Calu3 (cell line): ENCODE measurements at regions of chr1 and their contacts with region 1.

Region 1: GRCh38 chr1:244353551-244354091 is 98.1 kb downstream of the ADSS2 start:
- DNase-seq: peak; percentile 83
- H3K4me3 Mint-ChIP-seq: peak overlapping the region; percentile 27
- H3K27ac Mint-ChIP-seq: peak overlapping the region; percentile 95
- H3K4me1 Mint-ChIP-seq: peaks cover 74% of the 10 kb centered on the region
- H3K27me3 Mint-ChIP-seq: no peaks in the 10 kb centered on the region
- CTCF ChIP-seq: no peak

Region 2: DNA sequence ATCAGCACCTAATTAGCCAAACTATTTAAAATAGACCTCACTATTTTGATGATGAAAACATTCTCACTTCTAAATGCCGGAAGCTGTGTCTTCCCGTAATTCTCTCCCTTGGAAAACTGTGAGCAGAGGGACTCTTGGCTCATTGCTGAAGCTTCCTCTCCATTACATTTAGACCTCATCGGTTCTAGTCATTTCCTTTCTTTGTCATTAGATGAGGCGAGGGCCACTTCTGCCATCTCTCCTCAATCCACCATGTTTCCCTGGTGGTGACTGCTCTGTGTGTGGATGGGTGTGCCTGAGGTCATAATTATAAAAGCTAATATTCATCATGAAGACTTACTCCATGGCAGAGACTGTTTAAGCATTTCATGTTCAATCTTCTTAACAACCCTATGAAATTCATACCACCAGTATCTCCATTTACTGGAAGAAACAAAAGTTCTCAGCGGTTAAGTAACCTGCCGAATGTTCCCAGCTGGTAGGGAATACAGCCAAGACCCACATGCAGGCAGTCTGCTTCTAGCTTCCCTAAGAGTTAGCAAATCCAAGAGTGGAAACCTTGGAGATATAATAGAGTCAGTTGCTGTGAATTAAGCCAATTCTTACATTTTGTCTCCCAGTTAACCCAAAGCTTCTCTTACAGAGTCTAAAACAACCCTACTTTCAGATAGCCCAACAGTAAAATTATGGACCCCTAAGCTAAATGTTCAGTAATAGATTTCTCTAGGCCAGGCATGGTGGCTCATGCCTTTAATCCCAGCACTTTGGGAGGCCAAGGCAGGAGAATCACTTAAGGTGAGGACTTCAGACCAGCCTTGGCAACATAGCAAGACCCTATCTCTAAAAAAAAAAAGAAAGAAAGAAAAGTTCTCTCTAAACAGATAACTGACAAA is 146.3 kb before region 1 on chr1:
- CTCF ChIA-PET with region 1: no interaction called
- intact Hi-C with region 1: no loop called
- DNase-seq: no peak
- H3K4me3 Mint-ChIP-seq: no peak overlapping the region
- H3K27ac Mint-ChIP-seq: no peak overlapping the region
- H3K4me1 Mint-ChIP-seq: no peaks in the 10 kb centered on the region
- H3K27me3 Mint-ChIP-seq: no peaks in the 10 kb centered on the region
- CTCF ChIP-seq: no peak

Region 3: DNA sequence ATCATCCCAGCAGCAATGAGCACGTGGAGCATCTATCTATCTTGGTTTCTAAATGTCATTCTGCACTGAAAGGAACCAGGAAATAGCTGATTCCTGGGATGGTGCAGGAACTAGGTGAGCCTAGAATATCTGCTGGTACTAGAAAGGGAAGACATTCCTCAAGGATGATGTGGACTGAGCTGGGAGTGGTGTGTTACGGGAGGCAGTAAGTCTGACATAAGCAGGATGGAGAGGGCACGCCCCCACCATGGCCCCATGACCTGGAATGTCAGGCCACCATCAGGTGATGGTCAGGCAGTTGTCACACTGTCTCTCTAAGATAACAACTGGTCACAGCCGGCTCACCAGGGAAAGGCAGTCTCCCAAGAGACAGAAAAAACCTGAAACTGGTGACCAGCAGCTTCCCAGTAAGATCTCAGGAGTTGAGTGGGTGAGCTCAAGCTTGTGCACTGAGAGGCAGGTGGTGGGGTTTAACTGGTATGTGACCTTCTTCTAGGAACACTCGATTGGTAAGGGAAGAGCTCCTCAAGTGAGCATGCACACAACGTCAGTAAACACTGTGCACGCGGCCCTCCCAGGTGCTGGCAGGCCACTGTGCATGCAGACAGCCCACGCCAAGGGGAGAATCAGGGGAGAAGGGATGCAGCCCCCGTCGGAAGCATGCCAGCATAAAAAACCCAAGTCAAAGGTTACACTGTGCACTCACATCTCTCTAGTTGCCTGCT is 50.6 kb before region 1 on chr1:
- CTCF ChIA-PET with region 1: no interaction called
- intact Hi-C with region 1: loop called (anchors 2 kb)
- DNase-seq: peak; percentile 79
- H3K4me3 Mint-ChIP-seq: peak overlapping the region; percentile 56
- H3K27ac Mint-ChIP-seq: peak overlapping the region; percentile 92
- H3K4me1 Mint-ChIP-seq: peaks cover 49% of the 10 kb centered on the region
- H3K27me3 Mint-ChIP-seq: no peaks in the 10 kb centered on the region
- CTCF ChIP-seq: no peak

Region 4: DNA sequence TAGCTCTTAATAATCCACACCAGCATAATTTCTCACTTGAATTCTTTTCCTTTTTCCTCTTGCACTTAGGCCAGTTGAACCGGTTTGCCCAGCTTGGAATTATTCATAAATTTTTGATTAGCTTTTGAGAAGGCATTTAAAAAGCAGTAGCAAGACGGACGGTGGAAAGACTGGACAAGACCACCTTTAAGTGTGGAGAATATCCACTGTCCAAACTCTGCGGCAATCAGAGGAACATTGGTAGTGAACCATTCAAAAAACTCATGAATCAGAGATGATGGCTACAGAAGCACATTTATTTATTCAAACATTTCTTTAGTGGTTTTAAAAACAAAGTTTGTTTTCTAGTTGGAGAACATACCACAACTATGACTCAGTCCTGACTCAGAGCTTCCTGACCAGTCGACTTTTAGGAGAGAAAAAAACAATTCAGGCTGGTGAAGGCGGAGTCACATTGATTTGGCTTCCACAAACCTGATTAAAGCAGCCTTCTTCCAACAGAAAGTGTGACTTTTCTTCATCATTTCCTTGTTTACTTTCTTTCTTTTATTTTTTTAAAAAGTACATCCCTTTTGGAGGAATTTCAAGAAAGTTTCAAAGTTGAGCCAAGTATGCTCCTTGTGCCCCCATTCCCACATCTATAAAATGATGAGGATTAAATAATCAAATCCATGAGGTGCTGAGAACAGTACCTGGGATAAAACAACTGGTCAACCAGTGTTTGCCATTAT is 30.7 kb before region 1 on chr1:
- CTCF ChIA-PET with region 1: interaction called, 10 read pairs
- intact Hi-C with region 1: loop called (anchors 2 kb)
- DNase-seq: peak; percentile 81
- H3K4me3 Mint-ChIP-seq: peak overlapping the region; percentile 48
- H3K27ac Mint-ChIP-seq: peak overlapping the region; percentile 94
- H3K4me1 Mint-ChIP-seq: peaks cover 65% of the 10 kb centered on the region
- H3K27me3 Mint-ChIP-seq: no peaks in the 10 kb centered on the region
- CTCF ChIP-seq: no peak

Region 5: GRCh38 chr1:244391761-244392160 is 38.1 kb after region 1 on chr1:
- CTCF ChIA-PET with region 1: no interaction called
- intact Hi-C with region 1: loop called (anchors 5 kb)
- DNase-seq: no peak
- H3K4me3 Mint-ChIP-seq: no peak overlapping the region
- H3K27ac Mint-ChIP-seq: peak overlapping the region; percentile 59
- H3K4me1 Mint-ChIP-seq: peaks cover 28% of the 10 kb centered on the region
- H3K27me3 Mint-ChIP-seq: no peaks in the 10 kb centered on the region
- CTCF ChIP-seq: no peak

Region 6: DNA sequence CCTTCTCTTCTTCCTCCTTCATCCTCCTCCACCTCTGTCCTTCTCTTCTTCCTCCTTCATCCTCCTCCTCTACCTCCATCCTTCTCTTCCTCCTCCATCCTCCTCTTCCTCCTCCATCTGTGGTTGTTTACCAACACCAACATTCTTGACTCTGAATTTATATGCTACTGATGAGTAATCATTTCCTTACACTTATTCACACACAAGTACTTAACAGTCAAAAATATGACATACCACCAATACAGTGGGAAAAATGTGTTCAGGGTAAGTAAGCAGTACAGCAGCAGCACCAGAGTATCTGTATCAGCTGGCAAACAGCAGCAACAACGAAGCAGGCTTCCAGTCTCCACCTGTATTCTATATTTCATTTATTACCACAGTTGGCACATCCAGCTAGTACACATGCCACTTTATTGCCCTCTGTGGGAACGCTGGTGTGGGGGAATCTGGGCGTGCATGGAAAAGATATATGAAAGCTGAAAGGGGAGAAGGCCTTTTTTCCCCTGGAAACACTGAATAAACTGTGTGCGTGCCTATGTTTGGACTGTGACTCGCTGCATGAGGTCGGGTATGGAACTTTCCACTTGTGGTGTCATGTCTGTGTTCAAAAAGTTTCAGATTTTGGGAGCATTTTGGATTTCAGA is 82.1 kb after region 1 on chr1:
- CTCF ChIA-PET with region 1: no interaction called
- intact Hi-C with region 1: loop called (anchors 5 kb)
- DNase-seq: no peak
- H3K4me3 Mint-ChIP-seq: peak overlapping the region; percentile 40
- H3K27ac Mint-ChIP-seq: peak overlapping the region; percentile 52
- H3K4me1 Mint-ChIP-seq: peaks cover 64% of the 10 kb centered on the region
- H3K27me3 Mint-ChIP-seq: no peaks in the 10 kb centered on the region
- CTCF ChIP-seq: no peak